Activated CD4-positive, alpha-beta T cell treated with anti-CD3 and anti-CD28 coated beads, Interleukin-2, amount 10 ng/mL, durations not matched to agents 24 days and 14 days (primary cell): ENCODE measurements at regions of chr18 and their contacts with region 1.

Region 1: DNA sequence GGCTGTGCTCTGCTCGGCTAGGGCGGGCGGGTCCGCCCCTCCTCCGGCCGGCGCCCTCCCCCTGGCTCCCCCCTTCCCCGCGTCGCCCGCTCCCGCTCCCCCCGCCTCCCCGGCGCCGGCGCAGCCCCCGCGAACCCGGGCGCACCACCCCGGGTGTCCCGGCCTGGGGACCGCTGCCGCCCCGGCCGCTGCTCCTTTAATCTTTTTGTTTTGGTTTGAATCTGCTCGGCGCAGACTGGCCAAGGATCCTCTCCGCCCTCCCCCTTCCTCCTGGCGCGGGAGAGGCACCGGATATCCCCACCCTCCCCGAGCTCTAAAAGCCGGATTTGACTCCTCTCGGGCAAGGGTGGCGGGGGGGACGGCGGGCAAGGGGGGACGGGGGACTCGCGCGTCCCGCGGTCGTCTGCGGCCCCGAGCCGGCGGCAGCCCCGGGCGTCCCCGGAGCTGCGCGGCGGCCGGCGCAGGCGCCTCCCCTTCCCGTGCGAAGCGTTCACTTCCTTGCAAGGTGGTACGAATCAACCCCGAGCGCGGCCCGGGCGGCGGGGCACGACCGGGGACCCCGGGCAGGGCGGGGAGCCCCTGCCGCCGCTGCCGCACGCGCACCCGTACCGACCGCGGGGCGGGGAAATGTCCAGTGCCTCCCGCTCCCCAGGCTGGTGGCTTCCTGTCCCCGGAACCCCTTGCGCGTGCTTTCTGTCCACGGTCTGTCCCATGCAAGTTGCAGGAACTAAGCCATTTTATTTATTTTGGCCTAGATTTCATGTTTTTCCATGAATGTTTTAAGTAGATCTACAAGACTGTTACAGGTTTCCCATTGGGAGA is at the start of gene PTGR3:
- DNase-seq: peak; percentile 94
- H3K4me3 Mint-ChIP-seq: peak within 1 kb of the TSS; percentile 97
- H3K27ac Mint-ChIP-seq: peak within 1 kb of the TSS; percentile 96
- H3K4me1 Mint-ChIP-seq: peaks cover 50% of the 10 kb centered on the region
- H3K27me3 Mint-ChIP-seq: peaks cover 24% of the 10 kb centered on the region
- total RNA-seq, gene PTGR3: 23.3 and 23.6 TPM in 2 replicates

Region 2: DNA sequence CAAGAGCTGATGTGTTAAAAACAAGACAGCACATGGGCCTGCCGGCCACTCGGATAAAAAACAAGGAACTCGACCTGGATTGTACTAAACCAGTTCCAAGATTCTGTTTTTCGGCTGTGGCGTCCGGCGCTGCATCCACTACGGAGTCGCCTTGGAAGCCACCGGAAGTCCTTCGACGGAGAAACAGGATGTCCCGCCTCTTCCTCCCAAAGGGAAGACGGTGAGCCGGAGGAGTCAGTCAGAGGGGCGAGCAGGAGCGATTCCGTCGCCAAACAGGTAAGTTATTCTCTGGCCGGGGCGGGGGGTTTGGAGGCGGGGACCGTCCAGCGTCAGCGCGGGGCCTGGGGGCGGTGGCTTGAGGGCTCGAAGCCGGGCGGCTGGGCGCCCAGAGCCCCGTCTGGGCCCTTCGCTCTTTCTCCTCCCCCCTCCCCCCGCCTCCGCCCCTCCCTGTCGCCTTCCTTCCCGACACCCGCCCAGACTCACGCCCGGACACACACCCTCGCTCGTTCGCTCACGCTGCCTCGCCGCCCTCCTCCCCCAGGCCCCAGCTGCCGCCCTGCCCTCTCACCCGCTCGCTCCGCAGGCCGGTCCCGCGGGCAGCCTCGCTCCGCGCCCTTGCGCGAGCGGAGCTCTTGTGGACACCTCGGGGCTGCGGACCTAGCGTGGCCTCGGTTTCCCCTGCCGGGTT is 611.5 kb before region 1 on chr18 and contains the start of gene ZNF407:
- intact Hi-C with region 1: loop called (anchors 2 kb)
- DNase-seq: peak; percentile 97
- H3K4me3 Mint-ChIP-seq: peak within 1 kb of the TSS; percentile 97
- H3K27ac Mint-ChIP-seq: peak within 1 kb of the TSS; percentile 99
- H3K4me1 Mint-ChIP-seq: peaks cover 35% of the 10 kb centered on the region
- H3K27me3 Mint-ChIP-seq: no peaks in the 10 kb centered on the region
- total RNA-seq, gene ZNF407: 17.8 and 18.1 TPM in 2 replicates

Region 3: GRCh38 chr18:74994502-74995419 is 214.6 kb before region 1 on chr18:
- intact Hi-C with region 1: loop called (anchors 5 kb)
- DNase-seq: peak; percentile 67
- H3K4me3 Mint-ChIP-seq: peak overlapping the region; percentile 72
- H3K27ac Mint-ChIP-seq: peak overlapping the region; percentile 76
- H3K4me1 Mint-ChIP-seq: peaks cover 44% of the 10 kb centered on the region
- H3K27me3 Mint-ChIP-seq: no peaks in the 10 kb centered on the region

Region 4: DNA sequence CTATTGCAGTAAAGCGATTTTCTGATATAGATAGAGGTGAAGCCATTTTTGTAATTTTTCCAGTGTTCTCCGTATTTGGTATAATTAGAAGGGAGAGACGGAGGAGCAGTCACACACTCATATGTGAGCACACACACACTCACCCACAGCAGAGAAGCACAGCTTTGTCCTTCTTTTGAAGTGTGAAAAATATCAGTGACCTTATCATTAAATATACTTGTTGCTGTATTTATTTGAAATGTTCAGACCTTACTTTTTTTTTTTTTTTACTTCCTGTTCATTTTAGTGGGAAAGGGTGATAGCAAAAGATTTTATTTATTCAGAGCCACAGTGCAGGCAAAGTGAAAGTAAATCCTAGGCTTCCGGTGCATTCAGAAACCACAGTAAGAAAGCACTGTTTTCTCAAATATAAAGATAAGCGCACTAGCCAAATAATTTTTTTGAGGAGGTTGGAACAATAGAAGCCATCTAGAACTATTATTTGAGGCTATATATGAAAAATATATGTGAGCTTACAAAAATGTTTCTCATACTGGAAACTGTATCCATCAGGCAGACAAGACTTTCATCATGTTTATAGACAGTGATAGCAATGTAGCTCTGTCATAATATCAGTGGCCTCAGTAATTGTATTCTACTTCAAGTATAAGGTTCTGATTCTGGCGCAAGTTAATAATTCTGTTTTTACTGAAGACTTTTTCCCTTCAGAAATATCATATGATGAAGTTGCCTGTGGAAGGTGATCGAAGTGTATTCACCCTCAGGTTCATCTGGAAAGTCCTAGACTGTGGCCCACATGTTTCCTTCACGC is 38.5 kb after region 1 on chr18:
- intact Hi-C with region 1: loop called (anchors 1 kb)
- DNase-seq: peak; percentile 75
- H3K4me3 Mint-ChIP-seq: peak overlapping the region; percentile 90
- H3K27ac Mint-ChIP-seq: peak overlapping the region; percentile 79
- H3K4me1 Mint-ChIP-seq: peaks cover 32% of the 10 kb centered on the region
- H3K27me3 Mint-ChIP-seq: no peaks in the 10 kb centered on the region

Region 5: GRCh38 chr18:75638776-75639471 is 429.6 kb after region 1 on chr18:
- intact Hi-C with region 1: no loop called
- DNase-seq: peak; percentile 41
- H3K4me3 Mint-ChIP-seq: no peak overlapping the region
- H3K27ac Mint-ChIP-seq: no peak overlapping the region
- H3K4me1 Mint-ChIP-seq: no peaks in the 10 kb centered on the region
- H3K27me3 Mint-ChIP-seq: no peaks in the 10 kb centered on the region

Region 6: GRCh38 chr18:76492669-76493212 is 1283.4 kb after region 1 on chr18:
- intact Hi-C with region 1: loop called (anchors 5 kb)
- DNase-seq: peak; percentile 99
- H3K4me3 Mint-ChIP-seq: peak overlapping the region; percentile 97
- H3K27ac Mint-ChIP-seq: peak overlapping the region; percentile 84
- H3K4me1 Mint-ChIP-seq: peaks cover 31% of the 10 kb centered on the region
- H3K27me3 Mint-ChIP-seq: peaks cover 74% of the 10 kb centered on the region